ENCODE measurements at regions of chr6 and their contacts with region 1.

Region 1: DNA sequence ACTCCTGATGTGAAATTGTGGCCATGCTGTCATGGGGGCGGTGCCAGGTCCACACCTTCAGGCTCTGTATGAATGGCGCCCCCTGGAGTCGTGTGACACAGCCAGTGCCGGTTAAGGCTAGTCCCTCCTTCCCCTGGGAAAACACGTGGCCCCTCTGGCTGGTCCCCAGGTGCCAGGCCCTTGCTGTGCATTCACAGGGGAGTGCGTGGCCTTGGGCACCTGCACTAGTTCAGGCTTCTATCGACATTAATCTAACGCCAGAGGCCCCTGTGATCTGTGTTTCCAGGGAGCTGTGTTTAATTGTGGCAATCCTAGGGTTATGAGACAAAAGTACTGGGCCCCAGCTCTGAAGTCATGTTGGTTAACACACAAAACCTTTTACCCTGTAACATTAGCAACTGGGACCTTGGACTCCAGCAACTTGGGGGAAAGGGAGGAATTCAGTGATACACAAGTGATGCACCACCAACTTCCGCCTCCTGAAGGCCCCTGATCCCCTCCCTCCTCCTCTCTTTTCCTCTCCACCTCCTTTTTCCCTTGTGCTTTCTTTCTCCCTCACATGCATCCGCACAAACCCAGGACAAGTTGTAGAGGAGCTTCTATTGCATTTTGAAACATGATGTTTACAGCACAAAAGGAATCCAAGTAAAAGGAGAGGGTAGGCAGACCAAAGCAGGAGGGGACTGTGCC is 74.0 kb downstream of the SSR1 start:
- DNase-seq: peak; percentile 35 to 82 (median 64)
- ATAC-seq: peak; percentile 60
- H3K4me3 ChIP-seq: no peak overlapping the region
- H3K4me3 Mint-ChIP-seq: no peak overlapping the region
- H3K27ac ChIP-seq: no peak overlapping the region
- H3K27ac Mint-ChIP-seq: peak overlapping the region; percentile 52
- H3K4me1 ChIP-seq: peaks cover 7% of the 10 kb centered on the region
- H3K4me1 Mint-ChIP-seq: peaks cover 20% of the 10 kb centered on the region
- H3K27me3 ChIP-seq: no peaks in the 10 kb centered on the region
- H3K27me3 Mint-ChIP-seq: no peaks in the 10 kb centered on the region
- CTCF ChIP-seq: peak; percentile 67

Region 2: DNA sequence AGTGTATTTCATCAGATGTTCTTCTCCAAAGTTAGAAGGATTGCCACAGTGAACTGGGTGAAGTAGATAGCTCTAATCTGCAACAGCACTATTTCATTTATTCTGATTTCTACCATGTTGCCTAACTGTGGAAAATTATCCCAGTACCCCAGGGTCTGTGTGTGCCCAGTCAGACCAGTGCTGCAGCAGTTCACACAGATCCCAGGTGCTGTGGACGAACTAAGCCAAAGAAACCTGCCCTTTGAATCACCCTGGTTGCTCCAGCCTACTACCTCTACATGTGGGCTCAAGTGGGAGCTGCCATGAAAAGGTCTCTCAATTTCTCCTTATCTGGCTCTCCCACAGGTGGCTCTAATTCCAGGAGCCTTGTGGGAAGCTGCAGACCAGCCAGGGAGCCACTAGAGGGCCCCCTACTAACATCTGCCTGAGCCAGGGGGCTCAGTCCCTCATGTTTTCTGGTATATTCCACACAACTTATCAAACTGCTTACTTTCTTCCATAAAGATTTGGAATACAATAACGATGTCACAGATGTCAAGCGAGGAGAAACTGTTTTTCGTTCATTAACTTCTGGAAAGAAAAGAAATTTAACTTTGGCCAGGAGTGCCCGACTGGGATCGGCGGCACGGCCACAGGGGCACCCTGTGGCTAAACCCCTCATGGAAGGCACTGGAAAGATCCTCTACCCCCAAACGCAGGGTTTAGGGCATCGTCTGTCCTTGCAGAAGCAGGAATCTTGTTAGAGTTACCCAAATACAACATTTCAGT is 682.1 kb before region 1 on chr6:
- CTCF ChIA-PET with region 1: no interaction called
- POLR2A ChIA-PET with region 1: no interaction called
- intact Hi-C with region 1: loop called in 1 of 2 experiments (anchors 5 kb)
- DNase-seq: peak in 13 of 14 experiments; percentile 9 to 71 (median 26)
- ATAC-seq: peak; percentile 76
- H3K4me3 ChIP-seq: no peak overlapping the region
- H3K4me3 Mint-ChIP-seq: no peak overlapping the region
- H3K27ac ChIP-seq: no peak overlapping the region
- H3K27ac Mint-ChIP-seq: no peak overlapping the region
- H3K4me1 ChIP-seq: no peaks in the 10 kb centered on the region
- H3K4me1 Mint-ChIP-seq: peaks cover 16% of the 10 kb centered on the region
- H3K27me3 ChIP-seq: no peaks in the 10 kb centered on the region
- H3K27me3 Mint-ChIP-seq: no peaks in the 10 kb centered on the region
- CTCF ChIP-seq: peak; percentile 93

Region 3: GRCh38 chr6:6676910-6677441 is 562.1 kb before region 1 on chr6:
- CTCF ChIA-PET with region 1: interaction called, 11 read pairs
- POLR2A ChIA-PET with region 1: interaction called, 4 read pairs
- intact Hi-C with region 1: loop called (anchors 1 to 2 kb)
- DNase-seq: peak; percentile 62 to 87 (median 75)
- ATAC-seq: peak; percentile 99
- H3K4me3 ChIP-seq: no peak overlapping the region
- H3K4me3 Mint-ChIP-seq: no peak overlapping the region
- H3K27ac ChIP-seq: no peak overlapping the region
- H3K27ac Mint-ChIP-seq: peak overlapping the region; percentile 25
- H3K4me1 ChIP-seq: peaks cover 3% of the 10 kb centered on the region
- H3K4me1 Mint-ChIP-seq: peaks cover 15% of the 10 kb centered on the region
- H3K27me3 ChIP-seq: no peaks in the 10 kb centered on the region
- H3K27me3 Mint-ChIP-seq: no peaks in the 10 kb centered on the region
- CTCF ChIP-seq: peak; percentile 99

Region 4: GRCh38 chr6:6758915-6759654 is 480.0 kb before region 1 on chr6:
- CTCF ChIA-PET with region 1: no interaction called
- POLR2A ChIA-PET with region 1: no interaction called
- intact Hi-C with region 1: loop called in 1 of 2 experiments (anchors 1 kb)
- DNase-seq: peak in 6 of 14 experiments; percentile 12 to 59 (median 24)
- ATAC-seq: peak; percentile 43
- H3K4me3 ChIP-seq: no peak overlapping the region
- H3K4me3 Mint-ChIP-seq: no peak overlapping the region
- H3K27ac ChIP-seq: no peak overlapping the region
- H3K27ac Mint-ChIP-seq: no peak overlapping the region
- H3K4me1 ChIP-seq: no peaks in the 10 kb centered on the region
- H3K4me1 Mint-ChIP-seq: no peaks in the 10 kb centered on the region
- H3K27me3 ChIP-seq: no peaks in the 10 kb centered on the region
- H3K27me3 Mint-ChIP-seq: no peaks in the 10 kb centered on the region
- CTCF ChIP-seq: peak; percentile 41

Region 5: GRCh38 chr6:6788394-6789020 is 450.5 kb before region 1 on chr6:
- CTCF ChIA-PET with region 1: interaction called, 5 read pairs
- POLR2A ChIA-PET with region 1: no interaction called
- intact Hi-C with region 1: loop called in 1 of 2 experiments (anchors 10 kb)
- DNase-seq: peak in 2 of 14 experiments; percentile 40 to 44
- ATAC-seq: peak; percentile 80
- H3K4me3 ChIP-seq: no peak overlapping the region
- H3K4me3 Mint-ChIP-seq: no peak overlapping the region
- H3K27ac ChIP-seq: no peak overlapping the region
- H3K27ac Mint-ChIP-seq: no peak overlapping the region
- H3K4me1 ChIP-seq: no peaks in the 10 kb centered on the region
- H3K4me1 Mint-ChIP-seq: no peaks in the 10 kb centered on the region
- H3K27me3 ChIP-seq: no peaks in the 10 kb centered on the region
- H3K27me3 Mint-ChIP-seq: no peaks in the 10 kb centered on the region
- CTCF ChIP-seq: no peak

Region 6: GRCh38 chr6:7282097-7282906 is 43.3 kb after region 1 on chr6:
- CTCF ChIA-PET with region 1: no interaction called
- POLR2A ChIA-PET with region 1: no interaction called
- intact Hi-C with region 1: no loop called
- DNase-seq: no peak
- ATAC-seq: peak; percentile 24
- H3K4me3 ChIP-seq: no peak overlapping the region
- H3K4me3 Mint-ChIP-seq: peak overlapping the region; percentile 3
- H3K27ac ChIP-seq: peak overlapping the region in 1 of 2 donors; percentile 28
- H3K27ac Mint-ChIP-seq: peak overlapping the region; percentile 67
- H3K4me1 ChIP-seq: peaks cover 10% of the 10 kb centered on the region
- H3K4me1 Mint-ChIP-seq: peaks cover 17% of the 10 kb centered on the region
- H3K27me3 ChIP-seq: no peaks in the 10 kb centered on the region
- H3K27me3 Mint-ChIP-seq: no peaks in the 10 kb centered on the region
- CTCF ChIP-seq: no peak